GM12878 (cell line): ENCODE measurements at regions of chr13 and their contacts with region 1.

Region 1: DNA sequence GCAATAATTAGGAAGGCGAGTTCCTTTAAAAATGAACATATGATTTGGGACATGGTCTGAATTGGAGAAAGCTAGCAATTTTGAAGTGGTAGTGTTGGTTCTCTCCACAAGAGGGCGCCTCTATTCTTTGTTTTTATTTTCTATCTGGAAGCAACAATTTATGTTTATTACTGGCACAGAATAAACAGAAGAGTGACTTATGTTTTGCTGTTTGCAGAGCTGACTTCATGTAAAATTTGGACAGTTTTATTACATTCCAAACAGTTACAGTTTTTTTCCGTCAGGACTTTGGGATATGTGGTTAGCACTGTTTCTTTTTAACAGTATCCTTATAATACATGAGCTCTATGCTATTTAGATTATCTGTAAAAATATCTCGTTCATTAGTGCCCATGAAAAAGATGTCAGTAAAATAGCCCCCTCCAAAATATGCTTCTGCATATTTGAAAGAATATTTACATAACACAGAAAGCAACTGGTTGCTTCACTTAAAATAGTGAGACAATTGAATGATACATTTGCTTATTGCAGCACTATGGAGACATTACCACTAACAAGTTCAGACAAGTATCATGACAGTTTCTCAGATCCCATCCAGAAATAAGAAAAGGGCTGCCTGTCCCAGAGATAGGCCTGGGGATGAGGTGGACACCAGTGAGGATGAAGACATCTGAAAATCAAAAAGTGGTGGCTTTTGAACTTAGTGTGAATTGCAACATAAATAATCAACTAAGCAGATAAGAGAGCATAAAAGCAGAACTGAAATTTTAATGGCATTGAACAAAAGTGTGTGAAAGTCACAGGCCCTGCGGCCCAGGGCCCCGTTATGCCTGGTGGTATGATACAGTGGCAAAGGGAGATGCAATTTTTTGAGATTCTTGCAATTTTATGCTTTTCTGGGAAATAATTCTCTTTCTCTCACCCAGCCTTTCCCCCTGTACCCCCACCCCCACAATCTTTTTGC is 32.3 kb upstream of the FGF9 start:
- DNase-seq: no peak
- ATAC-seq: peak; percentile 79
- H3K4me3 ChIP-seq: no peak overlapping the region
- H3K27ac ChIP-seq: no peak overlapping the region
- H3K4me1 ChIP-seq: no peaks in the 10 kb centered on the region
- H3K27me3 ChIP-seq: no peaks in the 10 kb centered on the region
- CTCF ChIP-seq: peak; percentile 58 to 67 (median 65)
- EP300 ChIP-seq: no peak
- POLR2A ChIP-seq: no peak
- RAD21 ChIP-seq: peak; percentile 78

Region 2: DNA sequence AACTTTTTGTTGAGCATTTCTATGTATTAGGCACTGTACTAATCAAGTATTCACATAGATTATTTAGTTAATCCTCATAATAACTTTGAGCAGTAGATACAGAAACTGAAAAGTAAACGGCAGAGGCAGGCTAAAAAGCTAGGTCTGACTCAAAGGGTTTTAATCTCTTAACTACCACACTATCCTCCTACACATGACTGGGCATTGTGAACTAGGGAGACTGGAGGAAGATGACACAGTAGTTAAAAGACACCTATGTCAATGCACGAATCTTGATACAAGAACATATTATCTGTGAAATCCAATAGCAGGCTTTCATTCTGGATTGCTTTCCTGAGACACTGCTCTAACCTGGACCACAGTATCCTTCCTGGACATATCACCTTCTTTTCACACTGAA is 70.9 kb before region 1 on chr13:
- CTCF ChIA-PET with region 1: no interaction called
- POLR2A ChIA-PET with region 1: no interaction called
- RAD21 ChIA-PET with region 1: no interaction called
- SMC1A ChIA-PET with region 1: no interaction called
- in situ Hi-C with region 1: no loop called
- intact Hi-C with region 1: no loop called
- DNase-seq: no peak
- ATAC-seq: peak; percentile 67
- H3K4me3 ChIP-seq: no peak overlapping the region
- H3K27ac ChIP-seq: no peak overlapping the region
- H3K4me1 ChIP-seq: peaks cover 14% of the 10 kb centered on the region
- H3K27me3 ChIP-seq: no peaks in the 10 kb centered on the region
- CTCF ChIP-seq: no peak
- EP300 ChIP-seq: no peak
- POLR2A ChIP-seq: no peak
- RAD21 ChIP-seq: no peak

Region 3: DNA sequence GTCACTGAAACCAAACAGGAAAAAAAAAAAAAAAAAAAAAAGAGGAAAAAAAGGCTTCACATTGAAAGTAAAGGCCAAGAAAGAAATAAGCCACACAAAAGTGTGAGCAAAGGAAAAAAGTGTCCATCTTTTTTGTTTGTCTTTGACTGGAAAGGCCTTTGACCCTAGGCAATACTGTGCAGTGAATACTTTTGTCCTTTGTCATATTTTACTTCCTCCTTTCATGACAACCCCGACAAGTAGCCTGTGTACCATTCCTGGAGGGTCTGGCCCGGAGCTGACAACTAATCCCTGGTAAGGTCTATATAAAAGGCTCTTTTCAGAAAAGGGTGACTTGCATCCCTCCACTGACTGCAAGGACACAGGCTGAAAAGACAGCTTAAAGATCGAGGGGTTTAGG is 21.7 kb before region 1 on chr13:
- CTCF ChIA-PET with region 1: interaction called, 11 read pairs
- POLR2A ChIA-PET with region 1: no interaction called
- RAD21 ChIA-PET with region 1: interaction called, 8 read pairs
- SMC1A ChIA-PET with region 1: interaction called, 6 read pairs
- in situ Hi-C with region 1: no loop called
- intact Hi-C with region 1: no loop called
- DNase-seq: no peak
- ATAC-seq: no peak
- H3K4me3 ChIP-seq: no peak overlapping the region
- H3K27ac ChIP-seq: no peak overlapping the region
- H3K4me1 ChIP-seq: 0 out of 2 replicates have a peak, but pooled peaks cover 4% of the 10 kb centered on the region
- H3K27me3 ChIP-seq: peaks cover 0 to 2% of the 10 kb centered on the region in 2 experiments; a peak in 1 of 4 replicates
- CTCF ChIP-seq: no peak
- EP300 ChIP-seq: no peak
- POLR2A ChIP-seq: no peak
- RAD21 ChIP-seq: no peak

Region 4: GRCh38 chr13:21625366-21625765 is 13.2 kb before region 1 on chr13:
- CTCF ChIA-PET with region 1: interaction called, 10 read pairs
- POLR2A ChIA-PET with region 1: no interaction called
- RAD21 ChIA-PET with region 1: interaction called, 5 read pairs
- SMC1A ChIA-PET with region 1: interaction called, 4 read pairs
- in situ Hi-C with region 1: no loop called
- intact Hi-C with region 1: no loop called
- DNase-seq: no peak
- ATAC-seq: peak; percentile 90
- H3K4me3 ChIP-seq: no peak overlapping the region
- H3K27ac ChIP-seq: no peak overlapping the region
- H3K4me1 ChIP-seq: no peaks in the 10 kb centered on the region
- H3K27me3 ChIP-seq: no peaks in the 10 kb centered on the region
- CTCF ChIP-seq: peak; percentile 41 to 66 (median 49)
- EP300 ChIP-seq: no peak
- POLR2A ChIP-seq: no peak
- RAD21 ChIP-seq: peak; percentile 75

Region 5: DNA sequence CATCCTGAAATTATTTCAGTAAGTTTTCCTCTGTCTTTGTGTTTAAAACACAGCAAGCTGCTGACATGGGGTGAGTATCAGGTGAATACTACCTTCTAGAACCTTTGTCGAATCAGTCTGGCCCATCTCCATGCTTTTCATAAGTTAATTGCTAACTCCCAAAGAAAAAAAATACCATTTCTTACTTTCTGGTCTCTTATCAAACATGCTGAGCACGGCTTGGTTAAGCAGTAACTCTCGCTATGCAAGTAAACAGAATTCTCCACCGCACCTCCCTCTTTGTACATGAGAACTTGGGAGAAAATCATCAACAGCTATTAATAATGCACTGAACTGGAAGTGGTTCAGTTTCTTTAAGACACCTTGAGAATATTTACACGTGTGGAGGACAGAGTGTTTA is 120.9 kb after region 1 on chr13:
- CTCF ChIA-PET with region 1: interaction called, 4 read pairs
- POLR2A ChIA-PET with region 1: no interaction called
- RAD21 ChIA-PET with region 1: no interaction called
- SMC1A ChIA-PET with region 1: no interaction called
- in situ Hi-C with region 1: no loop called
- intact Hi-C with region 1: loop called (anchors 10 kb)
- DNase-seq: no peak
- ATAC-seq: no peak
- H3K4me3 ChIP-seq: no peak overlapping the region
- H3K27ac ChIP-seq: no peak overlapping the region
- H3K4me1 ChIP-seq: no peaks in the 10 kb centered on the region
- H3K27me3 ChIP-seq: no peaks in the 10 kb centered on the region
- CTCF ChIP-seq: no peak
- EP300 ChIP-seq: no peak
- POLR2A ChIP-seq: no peak
- RAD21 ChIP-seq: no peak

Region 6: DNA sequence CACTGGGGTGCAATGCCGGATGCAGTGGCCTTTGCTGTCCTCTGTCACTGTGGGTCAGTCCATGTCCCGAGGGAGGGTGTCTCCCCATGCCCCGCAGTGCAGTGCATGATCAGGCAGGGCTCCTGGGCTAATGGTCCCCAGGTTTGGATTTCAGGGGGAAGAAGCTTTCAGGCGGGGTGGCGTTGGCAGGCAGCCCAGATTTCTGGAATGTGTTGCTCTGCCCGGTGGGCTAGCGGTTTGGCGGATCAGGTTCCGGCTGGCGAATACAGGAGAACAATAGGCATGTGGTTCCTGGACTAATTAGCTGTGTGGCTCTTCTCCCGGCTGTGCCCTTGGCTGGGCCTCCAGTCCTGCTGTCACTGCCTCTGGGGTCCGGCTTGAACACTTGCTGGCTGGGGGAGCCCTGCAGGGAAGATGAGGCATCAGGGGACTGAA is 173.6 kb after region 1 on chr13:
- CTCF ChIA-PET with region 1: no interaction called
- POLR2A ChIA-PET with region 1: no interaction called
- RAD21 ChIA-PET with region 1: no interaction called
- SMC1A ChIA-PET with region 1: no interaction called
- in situ Hi-C with region 1: no loop called
- intact Hi-C with region 1: no loop called
- DNase-seq: no peak
- ATAC-seq: no peak
- H3K4me3 ChIP-seq: no peak overlapping the region
- H3K27ac ChIP-seq: no peak overlapping the region
- H3K4me1 ChIP-seq: no peaks in the 10 kb centered on the region
- H3K27me3 ChIP-seq: no peaks in the 10 kb centered on the region
- CTCF ChIP-seq: no peak
- EP300 ChIP-seq: no peak
- POLR2A ChIP-seq: no peak
- RAD21 ChIP-seq: no peak

Region 7: DNA sequence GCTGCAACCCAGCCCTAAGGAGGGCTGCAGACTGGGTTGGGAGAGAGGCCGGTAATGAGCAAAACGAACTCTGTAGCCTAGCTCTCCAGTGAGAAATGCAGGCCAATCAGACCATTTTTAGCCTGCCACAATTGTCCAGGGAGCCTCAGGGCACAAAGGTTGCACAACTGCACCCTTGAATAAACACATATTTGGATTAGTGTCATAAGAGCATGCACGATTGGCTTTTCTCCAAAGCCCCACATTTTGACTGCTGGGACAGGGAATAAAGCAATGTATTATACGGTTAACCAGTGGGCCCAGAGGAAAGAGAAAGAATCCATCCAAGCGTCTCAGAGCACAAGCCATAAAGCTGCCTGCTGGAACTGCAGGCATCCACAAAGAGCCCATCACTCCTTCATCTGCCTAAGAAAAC is 812.7 kb after region 1 on chr13:
- CTCF ChIA-PET with region 1: no interaction called
- POLR2A ChIA-PET with region 1: no interaction called
- RAD21 ChIA-PET with region 1: no interaction called
- SMC1A ChIA-PET with region 1: no interaction called
- in situ Hi-C with region 1: no loop called
- intact Hi-C with region 1: no loop called
- DNase-seq: no peak
- ATAC-seq: no peak
- H3K4me3 ChIP-seq: no peak overlapping the region
- H3K27ac ChIP-seq: no peak overlapping the region
- H3K4me1 ChIP-seq: no peaks in the 10 kb centered on the region
- H3K27me3 ChIP-seq: no peaks in the 10 kb centered on the region
- CTCF ChIP-seq: no peak
- EP300 ChIP-seq: no peak
- POLR2A ChIP-seq: no peak
- RAD21 ChIP-seq: no peak

Region 8: DNA sequence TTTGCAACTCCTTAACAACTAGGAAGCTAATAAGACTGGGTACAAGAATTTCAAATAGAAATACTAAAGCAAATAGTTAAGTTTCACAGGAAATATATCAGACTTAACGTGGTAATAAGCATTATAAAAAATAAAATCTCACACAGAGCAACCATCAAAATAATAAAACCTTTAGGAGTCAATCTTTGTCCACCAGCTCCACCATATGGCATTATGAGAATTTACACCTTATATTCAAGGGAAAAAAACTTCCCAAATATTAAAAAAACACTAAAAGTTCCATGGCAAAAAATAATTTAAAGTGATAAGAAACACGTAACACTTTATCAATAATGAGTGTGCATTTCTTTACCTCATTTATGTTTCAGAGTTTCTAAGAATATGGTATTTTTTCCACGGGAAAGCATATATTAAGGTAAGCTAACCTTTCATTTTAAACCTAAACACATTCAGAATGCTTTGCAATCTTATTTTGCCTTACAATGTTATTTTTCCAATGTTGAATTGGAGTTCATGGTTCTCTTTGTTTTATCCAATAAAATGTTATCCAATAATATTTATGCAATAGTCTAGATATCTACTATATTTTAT is 1119.0 kb after region 1 on chr13:
- CTCF ChIA-PET with region 1: interaction called, 7 read pairs
- POLR2A ChIA-PET with region 1: no interaction called
- RAD21 ChIA-PET with region 1: no interaction called
- SMC1A ChIA-PET with region 1: interaction called, 12 read pairs
- in situ Hi-C with region 1: no loop called
- intact Hi-C with region 1: loop called (anchors 10 kb)
- DNase-seq: no peak
- ATAC-seq: no peak
- H3K4me3 ChIP-seq: no peak overlapping the region
- H3K27ac ChIP-seq: no peak overlapping the region
- H3K4me1 ChIP-seq: no peaks in the 10 kb centered on the region
- H3K27me3 ChIP-seq: no peaks in the 10 kb centered on the region
- CTCF ChIP-seq: peak in 1 of 3 experiments; percentile 2; a peak in 1 of 6 replicates
- EP300 ChIP-seq: no peak
- POLR2A ChIP-seq: no peak
- RAD21 ChIP-seq: peak; percentile 52

Region 9: GRCh38 chr13:22793598-22794134 is 1155.1 kb after region 1 on chr13:
- CTCF ChIA-PET with region 1: interaction called, 28 read pairs
- POLR2A ChIA-PET with region 1: no interaction called
- RAD21 ChIA-PET with region 1: interaction called, 16 read pairs
- SMC1A ChIA-PET with region 1: interaction called, 14 read pairs
- in situ Hi-C with region 1: loop called (anchors 25 kb)
- intact Hi-C with region 1: loop called (anchors 5 kb)
- DNase-seq: no peak
- ATAC-seq: no peak
- H3K4me3 ChIP-seq: no peak overlapping the region
- H3K27ac ChIP-seq: no peak overlapping the region
- H3K4me1 ChIP-seq: no peaks in the 10 kb centered on the region
- H3K27me3 ChIP-seq: no peaks in the 10 kb centered on the region
- CTCF ChIP-seq: no peak
- EP300 ChIP-seq: no peak
- POLR2A ChIP-seq: no peak
- RAD21 ChIP-seq: no peak